ENCODE measurements at regions of chr2 and their contacts with region 1.

Region 1: GRCh38 chr2:86623651-86624541 is at the start of gene RNF103:
- DNase-seq: peak; percentile 83 to 97 (median 88)
- ATAC-seq: peak; percentile 93
- H3K4me3 ChIP-seq: peak within 1 kb of the TSS; percentile 85
- H3K4me3 Mint-ChIP-seq: peak within 1 kb of the TSS; percentile 86 to 99 (median 93)
- H3K27ac ChIP-seq: peak within 1 kb of the TSS; percentile 97
- H3K27ac Mint-ChIP-seq: peak within 1 kb of the TSS; percentile 90 to 99 (median 94)
- H3K4me1 ChIP-seq: peaks cover 11 to 17% of the 10 kb centered on the region in 2 donors
- H3K4me1 Mint-ChIP-seq: peaks cover 21 to 42% (median 34%) of the 10 kb centered on the region in 7 donors
- H3K27me3 ChIP-seq: no peaks in the 10 kb centered on the region
- H3K27me3 Mint-ChIP-seq: peaks cover 0 to 30% (median 0%) of the 10 kb centered on the region in 5 donors
- total RNA-seq, gene RNF103: 15.6 to 71.2 (median 37.8) TPM

Region 2: GRCh38 chr2:86195055-86195807 is 428.7 kb before region 1 on chr2 and contains the start of gene IMMT:
- CTCF ChIA-PET with region 1: no interaction called
- POLR2A ChIA-PET with region 1: no interaction called
- intact Hi-C with region 1: loop called (anchors 1 to 5 kb)
- DNase-seq: peak; percentile 86 to 96 (median 94)
- ATAC-seq: peak; percentile 94
- H3K4me3 ChIP-seq: peak within 1 kb of the TSS; percentile 74
- H3K4me3 Mint-ChIP-seq: peak within 1 kb of the TSS; percentile 86 to 99 (median 95)
- H3K27ac ChIP-seq: peak within 1 kb of the TSS; percentile 97
- H3K27ac Mint-ChIP-seq: peak within 1 kb of the TSS; percentile 82 to 97 (median 90)
- H3K4me1 ChIP-seq: peaks cover 15 to 23% of the 10 kb centered on the region in 2 donors
- H3K4me1 Mint-ChIP-seq: peaks cover 35 to 74% (median 60%) of the 10 kb centered on the region in 7 donors
- H3K27me3 ChIP-seq: no peaks in the 10 kb centered on the region
- H3K27me3 Mint-ChIP-seq: no peaks in the 10 kb centered on the region
- total RNA-seq, gene IMMT: 59.2 to 164 (median 77.0) TPM

Region 3: DNA sequence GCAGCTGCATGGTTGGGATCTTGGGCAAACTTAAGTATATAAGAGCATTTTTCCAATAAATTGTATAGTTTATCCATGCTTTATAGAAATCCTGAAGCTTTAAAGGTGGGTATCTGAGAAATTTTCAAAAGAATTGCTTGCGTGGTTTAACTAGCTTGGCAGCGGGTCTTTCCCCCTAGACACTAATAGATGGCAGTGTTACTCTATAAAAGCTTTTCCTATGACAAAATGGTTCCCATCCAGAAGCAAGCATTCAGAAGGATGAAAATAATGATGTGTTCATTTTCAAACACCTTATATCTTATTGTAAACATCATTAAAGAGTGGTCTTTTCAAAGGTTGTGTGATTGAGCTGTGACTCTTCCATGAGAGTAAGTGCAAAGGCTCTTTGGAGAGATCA is 136.8 kb before region 1 on chr2:
- CTCF ChIA-PET with region 1: no interaction called
- POLR2A ChIA-PET with region 1: interaction called, 7 read pairs
- intact Hi-C with region 1: loop called in 1 of 2 experiments (anchors 5 kb)
- DNase-seq: peak in 2 of 9 donors; percentile 14 to 22
- ATAC-seq: no peak
- H3K4me3 ChIP-seq: no peak overlapping the region
- H3K4me3 Mint-ChIP-seq: no peak overlapping the region
- H3K27ac ChIP-seq: no peak overlapping the region
- H3K27ac Mint-ChIP-seq: peak overlapping the region in 8 of 9 donors; percentile 1 to 75 (median 44)
- H3K4me1 ChIP-seq: no peaks in the 10 kb centered on the region
- H3K4me1 Mint-ChIP-seq: peaks cover 0 to 34% (median 8%) of the 10 kb centered on the region in 7 donors
- H3K27me3 ChIP-seq: no peaks in the 10 kb centered on the region
- H3K27me3 Mint-ChIP-seq: no peaks in the 10 kb centered on the region

Region 4: GRCh38 chr2:86552889-86553288 is 71.0 kb before region 1 on chr2:
- CTCF ChIA-PET with region 1: interaction called, 4 read pairs
- POLR2A ChIA-PET with region 1: interaction called, 9 read pairs
- intact Hi-C with region 1: loop called in 1 of 2 experiments (anchors 2 kb)
- DNase-seq: peak in 7 of 9 donors; percentile 42 to 75 (median 68)
- ATAC-seq: peak; percentile 87
- H3K4me3 ChIP-seq: peak overlapping the region; percentile 22
- H3K4me3 Mint-ChIP-seq: peak overlapping the region; percentile 61 to 90 (median 83)
- H3K27ac ChIP-seq: peak overlapping the region; percentile 8
- H3K27ac Mint-ChIP-seq: peak overlapping the region in 7 of 9 donors; percentile 71 to 98 (median 93)
- H3K4me1 ChIP-seq: peaks cover 13 to 30% of the 10 kb centered on the region in 2 donors
- H3K4me1 Mint-ChIP-seq: peaks cover 1 to 42% (median 19%) of the 10 kb centered on the region in 7 donors
- H3K27me3 ChIP-seq: no peaks in the 10 kb centered on the region
- H3K27me3 Mint-ChIP-seq: no peaks in the 10 kb centered on the region

Region 5: GRCh38 chr2:86584151-86584913 is 39.6 kb before region 1 on chr2:
- CTCF ChIA-PET with region 1: no interaction called
- POLR2A ChIA-PET with region 1: interaction called, 12 read pairs
- intact Hi-C with region 1: loop called in 1 of 2 experiments (anchors 2 kb)
- DNase-seq: peak in 7 of 9 donors; percentile 6 to 46 (median 29)
- ATAC-seq: peak; percentile 88
- H3K4me3 ChIP-seq: peak overlapping the region; percentile 21
- H3K4me3 Mint-ChIP-seq: peak overlapping the region in 9 of 10 donors; percentile 37 to 68 (median 47)
- H3K27ac ChIP-seq: peak overlapping the region; percentile 59
- H3K27ac Mint-ChIP-seq: peak overlapping the region; percentile 13 to 94 (median 88)
- H3K4me1 ChIP-seq: peaks cover 10 to 17% of the 10 kb centered on the region in 2 donors
- H3K4me1 Mint-ChIP-seq: peaks cover 5 to 27% (median 20%) of the 10 kb centered on the region in 7 donors
- H3K27me3 ChIP-seq: no peaks in the 10 kb centered on the region
- H3K27me3 Mint-ChIP-seq: peaks cover 0 to 2% (median 0%) of the 10 kb centered on the region in 5 donors

Region 6: DNA sequence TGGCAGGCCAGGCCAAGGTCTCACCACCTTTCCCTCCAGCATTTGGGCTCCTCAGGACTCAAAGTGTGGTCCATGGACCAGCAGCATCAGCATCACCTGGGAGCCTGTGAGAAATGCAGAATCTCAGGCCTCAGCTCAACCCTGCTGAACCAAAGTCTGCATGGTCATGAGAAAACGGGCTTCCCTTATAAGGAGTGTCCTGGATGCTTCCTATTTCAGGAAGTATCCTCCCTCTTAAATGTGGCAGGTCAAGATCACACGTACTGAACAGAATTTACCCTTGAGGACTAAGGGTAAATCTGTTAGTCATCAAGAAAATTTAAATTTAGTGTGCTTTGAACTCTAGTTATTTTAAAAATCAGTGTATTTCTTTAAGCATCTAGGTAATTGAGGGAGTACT is 155.1 kb after region 1 on chr2:
- CTCF ChIA-PET with region 1: no interaction called
- POLR2A ChIA-PET with region 1: no interaction called
- intact Hi-C with region 1: no loop called
- DNase-seq: no peak
- ATAC-seq: no peak
- H3K4me3 ChIP-seq: no peak overlapping the region
- H3K4me3 Mint-ChIP-seq: no peak overlapping the region
- H3K27ac ChIP-seq: no peak overlapping the region
- H3K27ac Mint-ChIP-seq: no peak overlapping the region
- H3K4me1 ChIP-seq: peaks cover 0 to 7% of the 10 kb centered on the region in 2 donors
- H3K4me1 Mint-ChIP-seq: peaks cover 0 to 2% (median 0%) of the 10 kb centered on the region in 7 donors
- H3K27me3 ChIP-seq: no peaks in the 10 kb centered on the region
- H3K27me3 Mint-ChIP-seq: no peaks in the 10 kb centered on the region

Measured in naive thymus-derived CD4-positive, alpha-beta T cell (primary cell).